SK-N-SH (cell line): ENCODE measurements at regions of chr14 and their contacts with region 1.

Region 1: GRCh38 chr14:64891839-64892375 is 12.2 kb upstream of the SPTB start:
- DNase-seq: peak; percentile 48
- H3K4me3 ChIP-seq: no peak overlapping the region; a peak in 1 of 4 replicates
- H3K27ac ChIP-seq: no peak overlapping the region
- H3K4me1 ChIP-seq: no peaks in the 10 kb centered on the region
- H3K27me3 ChIP-seq: no peaks in the 10 kb centered on the region; the same call in 1 of the 2 replicates
- CTCF ChIP-seq: peak; percentile 77
- EP300 ChIP-seq: no peak
- RAD21 ChIP-seq: peak; percentile 87

Region 2: DNA sequence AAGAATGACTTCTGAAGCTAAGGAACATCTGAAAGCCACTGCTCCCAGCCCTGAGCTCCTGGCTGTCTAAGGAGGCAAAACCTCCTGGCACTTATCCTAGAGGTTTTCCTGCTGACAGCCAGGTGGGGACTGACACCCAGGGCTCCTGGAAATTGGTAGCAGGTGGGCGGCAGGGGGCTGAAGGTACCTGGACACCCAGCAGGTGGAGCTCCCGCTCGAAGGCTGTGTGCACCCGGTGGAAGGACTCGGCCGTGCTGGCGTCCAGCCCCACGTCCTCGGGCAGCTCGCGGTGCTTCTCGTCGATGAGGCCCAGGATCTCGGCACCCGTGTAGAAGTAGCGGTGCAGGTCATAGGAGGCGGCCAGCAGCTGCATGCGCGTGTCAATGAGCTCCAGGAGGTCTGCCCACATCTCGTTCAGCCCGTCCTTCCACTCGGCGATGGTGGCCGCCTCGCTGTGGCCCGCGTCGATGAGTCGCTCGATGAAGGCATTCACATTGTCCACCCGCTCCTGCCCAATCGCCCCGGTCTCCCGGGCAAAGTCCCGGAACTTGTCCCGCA is 119.4 kb before region 1 on chr14:
- CTCF ChIA-PET with region 1: interaction called, 18 read pairs
- POLR2A ChIA-PET with region 1: interaction called, 3 read pairs
- DNase-seq: no peak
- H3K4me3 ChIP-seq: no peak overlapping the region
- H3K27ac ChIP-seq: no peak overlapping the region
- H3K4me1 ChIP-seq: peaks cover 0 to 3% of the 10 kb centered on the region in 2 experiments; a peak in 1 of 4 replicates
- H3K27me3 ChIP-seq: no peaks in the 10 kb centered on the region
- CTCF ChIP-seq: no peak; the same call in none of the 2 replicates
- EP300 ChIP-seq: no peak
- RAD21 ChIP-seq: no peak

Region 3: GRCh38 chr14:64800000-64800399 is 91.9 kb before region 1 on chr14:
- CTCF ChIA-PET with region 1: interaction called, 138 read pairs
- POLR2A ChIA-PET with region 1: no interaction called
- DNase-seq: peak; percentile 50
- H3K4me3 ChIP-seq: no peak overlapping the region
- H3K27ac ChIP-seq: no peak overlapping the region
- H3K4me1 ChIP-seq: peaks cover 2 to 27% of the 10 kb centered on the region in 2 experiments
- H3K27me3 ChIP-seq: no peaks in the 10 kb centered on the region
- CTCF ChIP-seq: peak; percentile 75
- EP300 ChIP-seq: no peak
- RAD21 ChIP-seq: peak; percentile 22; the same call in 1 of the 2 replicates

Region 4: GRCh38 chr14:64817631-64818030 is 74.3 kb before region 1 on chr14:
- CTCF ChIA-PET with region 1: interaction called, 163 read pairs
- POLR2A ChIA-PET with region 1: interaction called, 5 read pairs
- DNase-seq: no peak
- H3K4me3 ChIP-seq: no peak overlapping the region
- H3K27ac ChIP-seq: no peak overlapping the region
- H3K4me1 ChIP-seq: peaks cover 0 to 18% of the 10 kb centered on the region in 2 experiments; a peak in 1 of 4 replicates
- H3K27me3 ChIP-seq: no peaks in the 10 kb centered on the region
- CTCF ChIP-seq: no peak
- EP300 ChIP-seq: no peak
- RAD21 ChIP-seq: no peak

Region 5: GRCh38 chr14:64880221-64881121 is 11.4 kb before region 1 on chr14:
- CTCF ChIA-PET with region 1: interaction called, 88 read pairs
- POLR2A ChIA-PET with region 1: no interaction called
- DNase-seq: peak; percentile 89
- H3K4me3 ChIP-seq: peak overlapping the region; percentile 54 to 60
- H3K27ac ChIP-seq: peak overlapping the region in 1 of 2 experiments; percentile 55; a peak in 2 of 4 replicates
- H3K4me1 ChIP-seq: peaks cover 0 to 17% of the 10 kb centered on the region in 2 experiments; a peak in 2 of 4 replicates
- H3K27me3 ChIP-seq: peaks cover 44% of the 10 kb centered on the region
- CTCF ChIP-seq: no peak
- EP300 ChIP-seq: no peak
- RAD21 ChIP-seq: no peak

Region 6: GRCh38 chr14:65070455-65070976 is 178.6 kb after region 1 on chr14:
- CTCF ChIA-PET with region 1: no interaction called
- POLR2A ChIA-PET with region 1: no interaction called
- DNase-seq: peak; percentile 64
- H3K4me3 ChIP-seq: no peak overlapping the region
- H3K27ac ChIP-seq: peak overlapping the region in 1 of 2 experiments; percentile 47; a peak in 2 of 4 replicates
- H3K4me1 ChIP-seq: peaks cover 0 to 25% of the 10 kb centered on the region in 2 experiments; a peak in 1 of 4 replicates
- H3K27me3 ChIP-seq: no peaks in the 10 kb centered on the region
- CTCF ChIP-seq: no peak
- EP300 ChIP-seq: no peak
- RAD21 ChIP-seq: no peak

Region 7: DNA sequence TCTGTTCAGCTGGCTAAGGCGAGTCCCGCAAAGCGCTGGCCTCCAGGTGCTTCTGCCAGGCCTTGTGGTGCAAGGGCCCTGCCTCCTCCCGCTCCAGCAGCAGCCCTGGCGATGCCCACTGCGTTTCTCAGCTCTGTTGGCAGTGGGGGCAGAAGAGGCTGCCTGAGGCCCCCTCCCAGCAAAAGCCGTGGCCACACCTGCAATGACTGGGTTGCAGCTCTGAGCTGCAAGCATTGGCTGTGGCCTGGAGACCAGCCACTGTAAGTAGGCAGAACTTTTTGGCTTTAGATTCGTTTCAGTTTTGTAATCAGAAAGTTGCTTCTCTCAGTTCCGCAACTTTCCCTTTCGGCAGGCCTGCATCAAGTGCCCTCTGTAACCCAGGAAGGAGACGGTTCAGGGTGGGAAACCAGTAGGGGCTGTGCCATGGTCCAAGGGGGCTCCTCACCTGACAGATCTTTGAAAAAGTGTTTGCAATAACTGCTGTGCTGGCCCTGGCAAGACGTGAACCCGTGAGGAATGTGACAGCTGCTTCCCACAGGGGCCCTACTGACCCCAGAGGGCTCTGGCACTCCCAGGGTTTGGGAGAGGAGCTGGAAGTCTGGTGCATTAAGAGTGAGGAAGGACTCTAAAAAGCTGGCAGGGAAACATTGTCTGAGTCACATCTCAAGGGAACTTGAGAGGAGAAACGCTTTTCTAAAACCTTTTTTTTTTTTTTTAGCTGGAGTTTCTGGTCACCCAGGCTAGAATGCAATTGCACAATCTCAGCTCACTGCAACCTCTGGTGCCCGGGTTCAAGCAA is 264.9 kb after region 1 on chr14:
- CTCF ChIA-PET with region 1: no interaction called
- POLR2A ChIA-PET with region 1: no interaction called
- DNase-seq: no peak
- H3K4me3 ChIP-seq: no peak overlapping the region
- H3K27ac ChIP-seq: no peak overlapping the region
- H3K4me1 ChIP-seq: no peaks in the 10 kb centered on the region
- H3K27me3 ChIP-seq: no peaks in the 10 kb centered on the region
- CTCF ChIP-seq: no peak
- EP300 ChIP-seq: no peak
- RAD21 ChIP-seq: no peak